ENCODE measurements at regions of chr1 and their contacts with region 1.

Region 1: DNA sequence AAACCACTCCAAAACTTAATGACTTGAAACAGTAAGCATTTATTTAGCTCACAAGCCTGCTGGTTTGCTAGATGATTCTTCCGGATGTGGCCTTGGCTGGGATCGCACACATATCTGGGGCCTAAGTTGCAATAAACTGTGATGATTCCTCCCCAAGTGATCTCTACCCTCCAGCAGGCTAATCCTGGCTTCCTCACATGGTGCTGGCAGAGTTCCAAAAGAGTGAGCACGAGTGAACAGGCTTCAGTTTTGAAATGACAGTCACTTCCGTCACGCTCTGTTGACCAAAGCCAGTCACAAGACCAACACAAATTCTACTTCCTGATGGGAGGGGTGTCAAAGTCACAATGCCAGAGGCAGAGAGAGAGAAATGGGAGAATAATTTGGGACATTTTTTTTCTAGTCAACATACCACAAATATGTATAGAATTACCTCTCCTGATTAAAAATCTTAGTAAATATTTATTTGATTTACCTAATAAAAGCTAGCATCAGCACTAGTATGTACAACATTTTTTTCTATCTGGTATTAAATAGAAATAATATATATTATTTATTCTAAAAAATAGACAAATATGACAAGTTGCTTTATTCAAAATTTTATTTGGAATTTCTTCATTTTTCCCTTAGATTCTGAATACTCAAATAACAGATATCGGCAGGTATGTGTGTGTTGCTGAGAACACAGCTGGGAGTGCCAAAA is 292.7 kb downstream of the TPR start:
- DNase-seq: peak; percentile 52
- H3K4me3 ChIP-seq: no peak overlapping the region
- H3K27ac ChIP-seq: no peak overlapping the region
- H3K4me1 ChIP-seq: no peaks in the 10 kb centered on the region
- H3K27me3 ChIP-seq: no peaks in the 10 kb centered on the region
- CTCF ChIP-seq: no peak

Region 2: GRCh38 chr1:186022184-186022583 is 60.2 kb before region 1 on chr1:
- CTCF ChIA-PET with region 1: no interaction called
- dilution Hi-C with region 1: no loop called
- in situ Hi-C with region 1: no loop called
- intact Hi-C with region 1: loop called (anchors 5 kb)
- DNase-seq: no peak
- H3K4me3 ChIP-seq: no peak overlapping the region
- H3K27ac ChIP-seq: no peak overlapping the region
- H3K4me1 ChIP-seq: no peaks in the 10 kb centered on the region
- H3K27me3 ChIP-seq: no peaks in the 10 kb centered on the region
- CTCF ChIP-seq: no peak

Measured in mammary epithelial cell (primary cell).